Common myeloid progenitor, CD34-positive (primary cell): ENCODE measurements at regions of chr20 and their contacts with region 1.

Region 1: DNA sequence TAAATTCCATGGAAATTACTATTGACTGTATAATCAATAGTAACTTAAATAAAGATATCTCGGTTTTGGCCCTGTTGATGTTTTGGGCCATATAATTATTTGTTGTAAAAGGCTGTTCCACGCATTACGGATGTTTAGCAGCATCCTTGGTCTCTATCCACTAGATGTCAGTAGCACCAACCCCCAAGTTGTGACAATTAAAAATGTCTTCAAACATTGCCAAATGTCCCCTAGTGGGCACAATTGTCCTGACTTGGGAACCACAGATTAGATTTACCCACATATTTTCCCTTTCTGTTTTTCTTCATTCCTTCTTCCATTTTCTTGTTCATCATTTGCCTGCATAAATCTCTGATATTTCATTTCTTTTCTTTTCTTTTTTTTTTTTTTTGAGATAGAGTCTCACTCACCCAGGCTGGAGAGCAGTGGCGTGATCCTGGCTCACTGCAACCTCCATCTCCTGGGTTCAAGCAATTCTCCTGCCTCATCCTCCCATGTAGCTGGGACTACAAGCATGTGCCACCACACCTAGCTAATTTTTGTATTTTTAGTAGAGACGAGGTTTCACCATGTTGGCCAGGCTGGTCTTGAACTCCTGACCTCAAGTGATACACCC is 13.6 kb upstream of the WFDC8 start:
- DNase-seq: peak; percentile 70 to 85 (median 85)
- H3K4me3 ChIP-seq: no peak overlapping the region
- H3K27ac ChIP-seq: no peak overlapping the region
- H3K4me1 ChIP-seq: no peaks in the 10 kb centered on the region
- H3K27me3 ChIP-seq: peaks cover 0 to 9% (median 3%) of the 10 kb centered on the region in 5 experiments

Region 2: DNA sequence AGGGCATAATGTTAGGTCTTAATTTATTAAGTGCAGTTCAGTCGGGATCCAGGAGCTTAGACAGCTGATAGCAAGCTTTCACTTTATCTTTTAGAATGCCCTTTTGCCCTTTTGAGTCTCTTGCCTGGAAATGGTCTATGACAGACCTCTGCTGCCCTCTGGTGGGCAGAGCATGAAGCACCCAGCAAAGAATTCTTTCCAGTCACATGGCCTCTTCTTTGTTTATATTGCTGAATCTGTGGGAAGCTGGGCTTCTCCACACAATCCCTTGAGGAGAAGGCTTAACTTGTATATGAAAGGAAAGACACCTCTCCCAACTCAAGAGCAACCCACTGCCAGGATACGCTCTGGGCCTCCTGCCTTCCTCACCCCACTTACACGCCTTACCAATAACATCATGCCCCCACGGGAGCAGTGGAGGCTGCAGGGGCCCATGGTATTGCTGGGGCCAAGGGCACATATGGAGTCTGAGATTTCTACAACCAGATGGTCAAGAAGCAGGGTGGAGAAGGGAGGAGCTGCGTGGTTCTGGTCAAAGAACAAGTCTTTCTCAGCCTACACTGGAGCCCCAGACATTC is 178.6 kb after region 1 on chr20:
- CTCF ChIA-PET with region 1: interaction called, 20 read pairs
- POLR2A ChIA-PET with region 1: no interaction called
- DNase-seq: peak; percentile 77 to 90 (median 84)
- H3K4me3 ChIP-seq: no peak overlapping the region
- H3K27ac ChIP-seq: no peak overlapping the region
- H3K4me1 ChIP-seq: peaks cover 0 to 6% (median 2%) of the 10 kb centered on the region in 4 experiments
- H3K27me3 ChIP-seq: peaks cover 0 to 2% (median 0%) of the 10 kb centered on the region in 5 experiments